ENCODE measurements at regions of chr3 and their contacts with region 1.

Region 1: GRCh38 chr3:168752339-168752738 is 656.6 kb upstream of the GOLIM4 start:
- DNase-seq: no peak
- H3K4me3 ChIP-seq: no peak overlapping the region
- H3K27ac ChIP-seq: no peak overlapping the region
- H3K4me1 ChIP-seq: no peaks in the 10 kb centered on the region
- H3K27me3 ChIP-seq: no peaks in the 10 kb centered on the region
- CTCF ChIP-seq: no peak

Region 2: DNA sequence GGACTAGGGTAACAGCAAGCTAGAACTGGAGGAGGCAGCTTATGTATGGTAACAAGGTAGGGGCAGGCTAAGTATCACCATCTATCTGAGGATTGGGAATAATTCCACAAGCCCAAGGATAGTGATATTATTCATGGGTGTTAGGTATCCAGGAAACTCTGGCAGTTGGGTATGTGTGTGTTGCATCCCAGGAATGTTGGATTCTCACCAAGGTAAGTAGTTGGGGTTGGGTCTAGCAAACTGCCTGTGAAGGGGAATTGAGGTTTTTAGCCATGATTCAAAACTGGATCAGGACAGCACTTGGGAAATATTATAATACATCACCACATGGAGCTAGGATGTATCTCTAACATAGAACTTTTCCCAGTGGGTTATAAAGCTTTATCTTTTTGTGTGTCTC is 30.2 kb before region 1 on chr3:
- CTCF ChIA-PET with region 1: no interaction called
- POLR2A ChIA-PET with region 1: interaction called, 22 read pairs
- intact Hi-C with region 1: no loop called
- DNase-seq: no peak
- H3K4me3 ChIP-seq: no peak overlapping the region
- H3K27ac ChIP-seq: no peak overlapping the region
- H3K4me1 ChIP-seq: no peaks in the 10 kb centered on the region
- H3K27me3 ChIP-seq: no peaks in the 10 kb centered on the region
- CTCF ChIP-seq: no peak

Measured in PC-9 (cell line).